Activated CD8-positive, alpha-beta T cell treated with anti-CD3 and anti-CD28 coated beads for 36 hours (primary cell): ENCODE measurements at regions of chr4 and their contacts with region 1.

Region 1: DNA sequence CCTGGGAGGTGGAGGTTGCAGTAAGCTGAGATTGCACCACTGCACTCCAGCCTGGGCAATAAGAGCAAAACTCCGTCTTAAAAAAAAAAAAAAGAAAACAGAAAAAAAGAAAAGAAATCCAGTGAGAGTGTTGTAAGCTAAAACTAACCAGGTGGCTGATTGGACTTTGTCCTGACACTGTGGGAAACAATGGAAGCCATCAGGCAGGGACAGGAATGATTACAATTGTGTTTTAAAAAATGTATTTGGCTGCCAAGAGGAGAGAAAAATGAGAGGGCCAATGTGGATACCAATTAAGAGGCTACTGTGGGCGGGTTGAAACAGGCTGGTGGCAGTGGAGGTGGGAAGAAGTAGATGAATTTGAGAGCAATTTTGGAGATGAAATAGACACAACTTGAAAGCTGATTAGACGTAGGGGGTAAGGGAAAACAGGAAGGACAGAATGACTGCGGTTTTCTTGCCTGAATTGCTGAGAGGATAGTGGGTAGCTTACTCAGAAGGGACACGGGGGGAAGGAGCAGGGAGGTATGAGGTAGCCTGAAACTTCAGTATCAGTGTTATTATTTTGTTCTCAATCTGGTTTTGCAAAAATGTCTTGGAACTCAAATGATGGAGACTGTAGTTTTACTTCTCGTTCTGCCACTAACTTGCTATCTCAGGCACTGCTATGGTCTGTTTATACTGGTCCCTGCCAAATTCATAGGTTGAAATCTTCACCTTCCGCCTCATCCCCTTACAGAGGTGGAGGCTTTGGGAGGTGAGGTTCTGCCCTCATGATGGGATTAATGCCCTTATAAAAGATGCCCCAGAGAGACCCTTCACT is 45.6 kb upstream of the CHRNA9 start:
- DNase-seq: no peak
- ATAC-seq: peak; percentile 70
- H3K4me3 Mint-ChIP-seq: peak overlapping the region; percentile 38
- H3K27ac Mint-ChIP-seq: peak overlapping the region; percentile 88
- H3K4me1 Mint-ChIP-seq: peaks cover 57% of the 10 kb centered on the region
- H3K27me3 Mint-ChIP-seq: no peaks in the 10 kb centered on the region
- CTCF ChIP-seq: no peak

Region 2: DNA sequence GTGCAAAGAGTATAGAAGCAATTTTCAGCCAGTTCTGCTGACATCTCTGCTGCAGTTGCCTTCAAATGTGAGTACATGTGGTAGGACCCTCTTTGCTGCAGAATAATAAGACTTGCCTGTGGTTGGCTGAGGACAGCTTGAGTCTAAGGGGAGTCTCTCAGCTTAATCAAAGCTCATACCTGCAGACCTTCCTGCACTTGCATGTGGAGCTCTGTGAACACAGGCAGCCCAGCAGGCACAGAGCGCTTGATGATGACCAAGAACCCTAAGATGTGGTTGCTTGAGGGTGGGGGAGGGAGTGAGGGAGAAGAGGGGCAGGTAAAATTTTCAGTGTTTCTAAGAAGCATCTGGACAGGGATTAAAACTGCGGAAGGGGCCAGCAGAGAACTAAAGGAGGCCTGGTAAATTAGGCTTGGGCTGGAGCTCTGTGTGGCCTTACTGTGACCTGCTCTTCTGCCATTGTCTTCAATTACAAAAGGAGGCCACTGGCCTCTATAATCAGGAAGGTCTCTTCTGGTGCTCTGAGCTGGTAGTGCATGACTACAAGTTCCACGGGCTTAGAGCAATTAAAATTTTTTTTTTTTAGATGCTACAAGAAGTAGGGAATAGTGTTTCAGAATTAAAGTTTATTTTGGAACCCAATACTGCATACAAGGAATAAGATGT is 14.4 kb before region 1 on chr4:
- CTCF ChIA-PET with region 1: interaction called, 21 read pairs
- POLR2A ChIA-PET with region 1: interaction called, 16 read pairs
- intact Hi-C with region 1: no loop called
- DNase-seq: no peak
- ATAC-seq: peak; percentile 71
- H3K4me3 Mint-ChIP-seq: no peak overlapping the region
- H3K27ac Mint-ChIP-seq: peak overlapping the region; percentile 71
- H3K4me1 Mint-ChIP-seq: peaks cover 47% of the 10 kb centered on the region
- H3K27me3 Mint-ChIP-seq: no peaks in the 10 kb centered on the region
- CTCF ChIP-seq: no peak

Region 3: DNA sequence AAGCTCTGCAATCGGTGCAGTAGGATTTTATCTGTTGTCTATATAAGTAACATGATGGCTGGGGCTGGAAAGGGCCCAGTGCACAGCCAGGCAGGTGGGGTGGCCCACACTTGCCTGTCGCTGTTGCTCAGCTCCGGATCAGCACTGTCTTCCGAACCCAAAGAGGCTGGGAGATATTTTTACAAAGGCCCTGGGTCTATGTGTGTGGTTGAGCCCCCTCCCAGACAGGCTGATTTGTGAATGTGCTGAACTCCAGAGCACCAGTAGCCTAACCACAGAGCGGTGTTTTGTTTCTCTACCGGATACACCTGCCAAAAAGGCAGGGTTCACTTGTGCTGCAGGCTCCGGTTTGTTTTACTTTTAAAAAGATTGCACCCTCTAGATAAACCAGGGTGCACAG is 12.0 kb after region 1 on chr4:
- CTCF ChIA-PET with region 1: interaction called, 20 read pairs
- POLR2A ChIA-PET with region 1: interaction called, 20 read pairs
- intact Hi-C with region 1: no loop called
- DNase-seq: peak; percentile 70
- ATAC-seq: peak; percentile 45
- H3K4me3 Mint-ChIP-seq: peak overlapping the region; percentile 64
- H3K27ac Mint-ChIP-seq: peak overlapping the region; percentile 93
- H3K4me1 Mint-ChIP-seq: peaks cover 85% of the 10 kb centered on the region
- H3K27me3 Mint-ChIP-seq: no peaks in the 10 kb centered on the region
- CTCF ChIP-seq: no peak